ENCODE measurements at regions of chr5 and their contacts with region 1.

Region 1: DNA sequence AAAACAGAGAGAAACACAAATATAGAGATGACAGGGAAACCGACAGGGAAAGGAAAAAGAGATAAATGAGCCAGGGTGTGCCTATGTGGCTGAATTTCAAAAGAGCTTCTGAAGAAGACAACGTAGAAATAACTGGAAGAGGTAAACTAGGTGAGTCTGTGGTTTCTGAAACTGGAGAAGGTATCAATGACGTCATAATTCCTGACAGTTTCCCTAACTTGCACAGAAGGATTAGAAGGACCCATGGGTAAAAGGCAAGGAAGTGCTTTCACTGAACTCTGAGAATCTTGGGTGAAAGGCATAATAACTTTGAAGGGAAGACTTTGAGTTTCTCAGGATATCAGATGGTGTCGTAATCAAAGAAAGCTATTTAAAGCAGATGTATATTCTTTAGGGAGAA is 790.8 kb upstream of the NUDT12 start:
- DNase-seq: peak; percentile 49
- ATAC-seq: peak; percentile 44; the same call in 1 of the 2 replicates
- H3K4me3 ChIP-seq: no peak overlapping the region
- H3K27ac ChIP-seq: peak overlapping the region; percentile 80
- H3K4me1 ChIP-seq: peaks cover 16% of the 10 kb centered on the region
- H3K27me3 ChIP-seq: no peaks in the 10 kb centered on the region
- CTCF ChIP-seq: no peak

Region 2: GRCh38 chr5:104412649-104413246 is 59.4 kb after region 1 on chr5:
- CTCF ChIA-PET with region 1: no interaction called
- POLR2A ChIA-PET with region 1: no interaction called
- intact Hi-C with region 1: loop called (anchors 2 kb)
- DNase-seq: peak; percentile 64
- ATAC-seq: peak; percentile 64
- H3K4me3 ChIP-seq: no peak overlapping the region
- H3K27ac ChIP-seq: no peak overlapping the region
- H3K4me1 ChIP-seq: peaks cover 13% of the 10 kb centered on the region
- H3K27me3 ChIP-seq: no peaks in the 10 kb centered on the region
- CTCF ChIP-seq: peak; percentile 79

Region 3: DNA sequence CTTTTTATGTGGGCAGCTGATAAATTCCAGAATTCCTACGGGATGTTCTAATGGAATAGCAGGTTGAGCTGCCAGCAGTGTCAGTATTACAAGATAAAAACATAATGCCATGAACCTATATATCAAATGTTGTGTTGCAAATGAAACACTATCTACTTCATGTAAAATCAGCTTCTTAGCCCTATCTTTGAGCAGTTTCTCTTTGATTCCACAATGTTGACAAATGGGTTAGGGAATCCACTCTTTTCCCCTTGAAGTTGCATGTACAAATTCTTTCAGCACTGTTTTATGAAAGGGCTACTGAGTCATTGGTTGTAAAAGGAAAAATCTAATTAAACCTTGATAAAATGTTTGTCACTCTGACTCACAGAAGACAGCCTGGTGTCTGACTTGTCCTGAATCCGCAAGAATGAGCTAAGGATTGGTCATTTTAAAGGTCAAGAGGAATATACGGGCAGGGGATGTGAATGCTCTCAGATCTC is 159.8 kb after region 1 on chr5:
- CTCF ChIA-PET with region 1: no interaction called
- POLR2A ChIA-PET with region 1: no interaction called
- intact Hi-C with region 1: loop called (anchors 1 kb)
- DNase-seq: peak; percentile 97
- ATAC-seq: peak; percentile 94
- H3K4me3 ChIP-seq: peak overlapping the region; percentile 15; the same call in 1 of the 2 replicates
- H3K27ac ChIP-seq: peak overlapping the region; percentile 67
- H3K4me1 ChIP-seq: peaks cover 29% of the 10 kb centered on the region
- H3K27me3 ChIP-seq: no peaks in the 10 kb centered on the region
- CTCF ChIP-seq: no peak

Region 4: GRCh38 chr5:104556948-104557347 is 203.6 kb after region 1 on chr5:
- CTCF ChIA-PET with region 1: no interaction called
- POLR2A ChIA-PET with region 1: no interaction called
- intact Hi-C with region 1: loop called (anchors 5 kb)
- DNase-seq: no peak
- ATAC-seq: no peak
- H3K4me3 ChIP-seq: no peak overlapping the region
- H3K27ac ChIP-seq: no peak overlapping the region
- H3K4me1 ChIP-seq: no peaks in the 10 kb centered on the region
- H3K27me3 ChIP-seq: no peaks in the 10 kb centered on the region
- CTCF ChIP-seq: no peak

Region 5: GRCh38 chr5:104606258-104606829 is 253.0 kb after region 1 on chr5:
- CTCF ChIA-PET with region 1: no interaction called
- POLR2A ChIA-PET with region 1: no interaction called
- intact Hi-C with region 1: loop called (anchors 5 kb)
- DNase-seq: no peak
- ATAC-seq: no peak
- H3K4me3 ChIP-seq: no peak overlapping the region
- H3K27ac ChIP-seq: no peak overlapping the region
- H3K4me1 ChIP-seq: no peaks in the 10 kb centered on the region
- H3K27me3 ChIP-seq: no peaks in the 10 kb centered on the region
- CTCF ChIP-seq: no peak

Region 6: DNA sequence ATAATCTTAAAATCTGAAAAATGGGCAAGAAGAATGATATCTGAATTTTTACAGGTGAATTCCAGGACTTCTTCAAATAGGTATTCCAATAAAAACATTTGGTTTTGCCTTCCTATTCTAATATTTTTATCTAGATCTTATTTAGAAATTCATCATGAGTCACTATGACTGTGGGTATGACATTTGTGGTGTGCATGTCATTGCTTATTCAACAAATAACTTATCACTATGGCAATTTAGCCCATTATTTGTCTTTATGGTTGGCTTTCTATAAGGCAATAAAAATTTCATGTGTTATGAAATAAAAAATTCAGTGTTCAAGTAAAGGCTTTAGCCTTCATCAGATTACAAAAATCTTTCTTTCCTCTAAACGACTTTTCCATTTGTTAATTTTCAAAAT is 348.8 kb after region 1 on chr5:
- CTCF ChIA-PET with region 1: no interaction called
- POLR2A ChIA-PET with region 1: no interaction called
- intact Hi-C with region 1: loop called (anchors 2 kb)
- DNase-seq: peak; percentile 95
- ATAC-seq: peak; percentile 77
- H3K4me3 ChIP-seq: 0 out of 2 replicates have a peak overlapping the region, but pooled peaks have one; percentile 12
- H3K27ac ChIP-seq: peak overlapping the region; percentile 88
- H3K4me1 ChIP-seq: peaks cover 35% of the 10 kb centered on the region
- H3K27me3 ChIP-seq: no peaks in the 10 kb centered on the region
- CTCF ChIP-seq: no peak